ENCODE measurements at regions of chr4 and their contacts with region 1.

Region 1: GRCh38 chr4:101169044-101170014 is 178.0 kb downstream of the PPP3CA start:
- DNase-seq: peak; percentile 80
- H3K4me3 Mint-ChIP-seq: no peak overlapping the region
- H3K27ac Mint-ChIP-seq: no peak overlapping the region
- H3K4me1 Mint-ChIP-seq: peaks cover 4% of the 10 kb centered on the region
- H3K27me3 Mint-ChIP-seq: no peaks in the 10 kb centered on the region

Region 2: DNA sequence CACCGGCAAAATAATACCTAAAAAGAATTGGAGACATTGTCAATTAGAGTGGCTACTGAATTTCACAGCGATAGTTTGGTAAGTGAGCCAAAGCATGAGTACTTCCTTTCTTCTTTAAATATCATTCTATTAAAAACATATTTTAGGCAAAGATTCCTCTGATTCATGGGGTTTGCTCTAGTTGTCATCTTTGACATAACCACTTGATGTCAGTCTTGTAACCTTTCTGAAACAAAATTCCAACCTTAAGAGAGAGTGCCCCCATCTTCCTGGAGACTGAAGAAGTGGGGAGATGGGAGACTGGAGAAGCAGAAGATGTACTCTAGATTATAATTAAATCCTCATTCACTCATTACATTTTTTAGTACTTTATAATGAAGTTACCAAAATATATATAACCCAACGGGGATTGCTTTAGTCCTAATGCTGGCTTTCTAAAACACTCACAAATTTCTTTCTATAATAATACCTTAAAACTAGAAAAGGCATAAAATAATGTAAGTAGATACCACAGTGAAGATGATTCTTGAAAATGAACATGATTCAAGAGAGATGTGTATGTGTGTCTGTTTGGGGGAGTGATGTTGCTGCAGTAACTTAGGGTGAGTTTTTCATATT is 747.9 kb before region 1 on chr4:
- CTCF ChIA-PET with region 1: no interaction called
- intact Hi-C with region 1: loop called (anchors 5 kb)
- DNase-seq: no peak
- H3K4me3 Mint-ChIP-seq: no peak overlapping the region
- H3K27ac Mint-ChIP-seq: no peak overlapping the region
- H3K4me1 Mint-ChIP-seq: peaks cover 2% of the 10 kb centered on the region
- H3K27me3 Mint-ChIP-seq: no peaks in the 10 kb centered on the region

Region 3: DNA sequence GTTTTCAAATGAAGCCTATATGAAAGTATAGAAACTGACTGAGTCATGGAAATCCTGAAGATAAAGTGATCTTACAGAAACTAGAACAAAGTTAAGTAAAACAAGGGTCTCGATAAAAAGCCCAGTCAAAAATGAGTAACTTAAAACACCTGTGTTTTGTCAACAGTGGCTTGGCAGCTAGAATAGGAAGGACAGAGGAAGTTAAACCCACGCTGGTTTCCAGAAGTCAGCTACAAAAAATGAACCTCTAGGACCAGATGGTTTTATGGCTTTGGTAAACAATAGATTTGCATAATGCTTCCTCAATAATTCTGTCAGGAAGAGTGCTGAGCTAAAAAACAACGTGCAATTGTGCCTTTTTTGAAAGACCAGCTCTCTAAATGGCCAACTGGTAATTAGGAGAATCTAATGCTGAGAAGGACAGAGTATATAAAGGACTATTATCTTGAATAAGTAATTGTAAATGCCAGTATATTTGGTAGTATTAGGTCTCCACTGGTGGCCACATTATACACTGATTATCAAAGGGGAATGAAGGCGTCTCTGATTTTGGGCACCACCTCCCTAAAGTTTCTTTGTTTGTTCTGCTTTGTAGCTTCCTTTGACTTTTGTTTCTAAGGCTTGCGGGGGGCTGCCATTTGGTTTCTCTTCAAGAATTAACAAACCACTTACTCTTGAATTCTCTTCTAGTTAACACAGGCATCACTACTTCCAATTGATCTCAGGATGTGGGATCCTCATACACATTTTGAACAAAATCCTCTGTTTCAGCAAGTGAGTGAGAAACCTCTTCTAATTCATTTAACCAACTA is 250.2 kb after region 1 on chr4:
- CTCF ChIA-PET with region 1: no interaction called
- intact Hi-C with region 1: loop called (anchors 10 kb)
- DNase-seq: no peak
- H3K4me3 Mint-ChIP-seq: no peak overlapping the region
- H3K27ac Mint-ChIP-seq: no peak overlapping the region
- H3K4me1 Mint-ChIP-seq: peaks cover 36% of the 10 kb centered on the region
- H3K27me3 Mint-ChIP-seq: peaks cover 43% of the 10 kb centered on the region

Region 4: GRCh38 chr4:101527188-101527587 is 357.9 kb after region 1 on chr4:
- CTCF ChIA-PET with region 1: interaction called, 4 read pairs
- intact Hi-C with region 1: loop called (anchors 2 kb)
- DNase-seq: peak; percentile 88
- H3K4me3 Mint-ChIP-seq: no peak overlapping the region
- H3K27ac Mint-ChIP-seq: no peak overlapping the region
- H3K4me1 Mint-ChIP-seq: peaks cover 15% of the 10 kb centered on the region
- H3K27me3 Mint-ChIP-seq: peaks cover 45% of the 10 kb centered on the region

Region 5: DNA sequence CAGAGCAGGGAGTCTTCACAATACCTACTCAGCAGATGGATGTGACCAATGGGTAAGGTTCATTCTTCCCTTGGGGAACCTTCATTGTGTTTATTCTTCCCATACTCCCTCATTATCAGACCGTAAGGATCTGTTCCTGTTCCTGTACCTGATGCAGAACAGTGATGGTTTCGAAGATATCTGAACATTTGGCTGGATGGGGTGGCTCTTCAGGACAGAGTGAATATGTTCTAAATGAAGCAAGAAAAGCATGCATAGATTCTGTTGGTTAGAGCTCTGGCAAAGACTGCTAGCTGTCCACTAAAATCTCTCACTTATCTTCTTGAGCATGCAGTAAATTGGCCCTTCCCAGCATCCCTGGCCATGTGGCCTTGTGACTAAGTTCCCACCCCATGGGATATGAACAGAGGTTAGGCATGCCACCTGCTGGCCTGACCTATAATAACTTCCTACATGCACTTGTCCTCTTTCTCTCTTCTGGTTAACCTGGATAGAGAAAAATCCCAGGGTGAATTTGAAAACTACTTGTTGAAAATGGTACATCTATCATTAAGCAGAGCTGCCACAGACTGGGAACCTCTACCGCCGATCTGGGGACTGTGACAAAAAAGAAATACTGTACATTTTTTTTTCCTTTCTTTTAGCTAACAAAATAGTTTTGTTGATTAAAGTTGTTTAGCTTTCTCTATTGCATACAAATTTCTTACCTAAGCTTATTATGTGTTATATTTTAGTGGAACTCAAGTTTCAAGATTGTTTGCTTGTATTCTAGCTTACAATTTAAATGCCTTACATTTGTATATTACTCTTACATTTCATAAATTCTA is 561.2 kb after region 1 on chr4:
- CTCF ChIA-PET with region 1: interaction called, 29 read pairs
- intact Hi-C with region 1: loop called (anchors 1 kb)
- DNase-seq: peak; percentile 76
- H3K4me3 Mint-ChIP-seq: no peak overlapping the region
- H3K27ac Mint-ChIP-seq: no peak overlapping the region
- H3K4me1 Mint-ChIP-seq: no peaks in the 10 kb centered on the region
- H3K27me3 Mint-ChIP-seq: no peaks in the 10 kb centered on the region

Region 6: DNA sequence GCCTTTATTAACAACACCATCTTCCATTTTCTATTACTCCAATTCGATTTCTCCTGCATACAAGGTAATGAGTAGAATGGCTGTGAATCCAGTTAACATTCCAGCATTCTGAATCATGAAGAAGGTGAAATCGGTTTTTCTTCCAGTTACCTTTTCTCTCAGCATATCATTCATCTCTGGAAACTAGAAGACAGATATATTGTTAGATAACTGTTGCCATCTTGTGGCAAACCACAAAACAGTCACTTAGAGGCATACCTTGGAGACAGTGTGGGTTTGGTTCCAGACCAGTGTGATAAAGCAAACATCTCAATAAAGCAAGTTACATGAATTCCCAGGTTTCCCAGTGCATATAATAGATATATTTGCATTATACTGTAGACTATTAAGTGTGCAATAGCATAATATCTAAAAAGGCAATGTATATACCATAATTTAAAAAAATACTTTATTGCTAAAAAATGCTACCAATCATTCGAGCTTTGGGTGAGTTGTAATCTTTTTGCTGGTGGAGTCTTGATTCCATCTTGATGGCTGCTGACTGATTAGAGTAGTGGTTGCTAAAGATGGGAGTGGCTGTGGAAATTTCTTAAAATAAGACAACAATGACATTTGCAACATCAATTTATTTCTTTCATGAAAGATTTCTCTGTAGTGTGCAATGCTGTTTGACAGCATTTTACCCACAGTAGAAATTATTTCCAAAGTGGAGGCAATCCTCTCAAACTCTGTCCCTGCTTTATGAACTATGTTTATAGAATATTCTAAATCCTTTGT is 1093.9 kb after region 1 on chr4:
- CTCF ChIA-PET with region 1: no interaction called
- intact Hi-C with region 1: loop called (anchors 1 kb)
- DNase-seq: peak; percentile 22
- H3K4me3 Mint-ChIP-seq: no peak overlapping the region
- H3K27ac Mint-ChIP-seq: no peak overlapping the region
- H3K4me1 Mint-ChIP-seq: peaks cover 3% of the 10 kb centered on the region
- H3K27me3 Mint-ChIP-seq: no peaks in the 10 kb centered on the region